Activated CD4-positive, alpha-beta T cell treated with anti-CD3 and anti-CD28 coated beads for 36 hours (primary cell): ENCODE measurements at regions of chr11 and their contacts with region 1.

Region 1: DNA sequence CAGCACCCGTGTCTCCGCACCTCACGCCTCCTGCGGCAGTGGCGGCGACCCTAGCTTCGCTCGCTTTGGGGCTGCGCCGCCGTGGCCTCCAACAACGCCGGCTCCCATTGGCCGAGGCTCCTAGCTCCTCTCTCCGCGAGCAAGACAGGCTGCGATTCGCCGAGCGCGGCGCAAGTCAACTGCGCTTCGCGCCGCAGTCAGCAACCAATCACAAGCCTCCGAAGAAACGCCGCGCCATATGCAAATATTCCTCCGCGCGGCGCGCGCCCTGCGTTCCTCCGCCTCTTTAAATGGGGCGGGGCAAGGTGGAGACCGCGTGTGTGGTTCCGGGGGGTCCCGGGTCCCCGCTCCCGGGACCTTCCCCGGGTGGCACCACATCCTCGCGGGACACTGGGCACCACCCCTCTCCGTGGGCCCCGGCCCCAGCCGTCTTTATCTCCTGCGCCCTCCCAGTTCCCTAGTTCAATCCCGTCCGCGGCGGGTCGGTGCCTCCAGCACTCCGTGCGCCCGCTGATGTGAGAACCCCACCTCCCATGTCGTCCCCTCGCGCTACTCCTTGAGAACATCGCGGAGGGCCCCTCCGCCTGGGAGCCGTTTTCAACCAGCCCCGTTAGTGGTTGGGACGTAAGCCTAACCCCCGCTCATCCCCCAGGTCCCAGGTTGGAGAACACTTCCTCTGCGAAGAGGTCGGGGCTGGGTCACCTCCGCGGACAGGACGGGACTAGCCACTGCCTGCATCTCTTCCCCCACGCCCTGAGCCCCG is at the start of gene NAP1L4:
- DNase-seq: peak; percentile 98
- ATAC-seq: peak; percentile 76
- H3K4me3 Mint-ChIP-seq: peak within 1 kb of the TSS; percentile 100
- H3K27ac Mint-ChIP-seq: peak within 1 kb of the TSS; percentile 100
- H3K4me1 Mint-ChIP-seq: peaks cover 30% of the 10 kb centered on the region
- H3K27me3 Mint-ChIP-seq: no peaks in the 10 kb centered on the region
- total RNA-seq, gene NAP1L4: 241 to 246 TPM

Region 2: DNA sequence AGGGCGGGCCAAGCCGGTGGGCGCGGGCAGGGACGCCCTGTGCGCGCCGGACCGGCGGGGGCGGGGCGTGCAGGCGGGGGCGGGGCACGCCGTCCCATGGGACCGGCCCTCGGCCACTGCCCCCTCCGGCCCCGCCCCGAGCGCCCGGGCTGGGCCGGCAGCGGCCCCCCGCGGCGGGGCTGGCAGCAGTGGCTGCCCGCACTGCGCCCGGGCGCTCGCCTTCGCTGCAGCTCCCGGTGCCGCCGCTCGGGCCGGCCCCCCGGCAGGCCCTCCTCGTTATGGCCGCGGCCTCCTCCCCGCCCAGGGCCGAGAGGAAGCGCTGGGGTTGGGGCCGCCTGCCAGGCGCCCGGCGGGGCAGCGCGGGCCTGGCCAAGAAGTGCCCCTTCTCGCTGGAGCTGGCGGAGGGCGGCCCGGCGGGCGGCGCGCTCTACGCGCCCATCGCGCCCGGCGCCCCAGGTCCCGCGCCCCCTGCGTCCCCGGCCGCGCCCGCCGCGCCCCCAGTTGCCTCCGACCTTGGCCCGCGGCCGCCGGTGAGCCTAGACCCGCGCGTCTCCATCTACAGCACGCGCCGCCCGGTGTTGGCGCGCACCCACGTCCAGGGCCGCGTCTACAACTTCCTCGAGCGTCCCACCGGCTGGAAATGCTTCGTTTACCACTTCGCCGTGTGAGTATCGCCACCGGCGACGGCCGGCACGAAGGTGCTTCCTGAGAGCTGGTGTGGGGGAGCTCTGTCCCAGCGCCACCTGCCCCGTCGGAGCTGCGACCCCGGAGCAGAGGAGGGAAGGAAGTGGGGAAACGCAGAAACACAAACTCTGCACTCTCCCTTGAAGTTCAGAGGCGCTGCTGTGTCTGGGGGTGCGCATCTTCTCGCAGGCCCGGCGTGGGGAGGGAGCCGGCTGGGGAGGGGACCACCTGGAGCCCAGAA is 547.3 kb before region 1 on chr11 and contains the start of gene KCNQ1:
- CTCF ChIA-PET with region 1: no interaction called
- POLR2A ChIA-PET with region 1: no interaction called
- intact Hi-C with region 1: loop called in 1 of 2 experiments (anchors 1 kb)
- DNase-seq: peak; percentile 63
- ATAC-seq: peak; percentile 63
- H3K4me3 Mint-ChIP-seq: peak within 1 kb of the TSS; percentile 86
- H3K27ac Mint-ChIP-seq: peak within 1 kb of the TSS; percentile 71
- H3K4me1 Mint-ChIP-seq: peaks cover 38% of the 10 kb centered on the region
- H3K27me3 Mint-ChIP-seq: no peaks in the 10 kb centered on the region
- total RNA-seq, gene KCNQ1: 9.1 to 10.9 TPM

Region 3: GRCh38 chr11:2901854-2902783 is 90.3 kb before region 1 on chr11:
- CTCF ChIA-PET with region 1: no interaction called
- POLR2A ChIA-PET with region 1: no interaction called
- intact Hi-C with region 1: loop called in 1 of 2 experiments (anchors 1 kb)
- DNase-seq: peak; percentile 98
- ATAC-seq: peak; percentile 96
- H3K4me3 Mint-ChIP-seq: peak overlapping the region; percentile 64
- H3K27ac Mint-ChIP-seq: peak overlapping the region; percentile 22
- H3K4me1 Mint-ChIP-seq: peaks cover 33% of the 10 kb centered on the region
- H3K27me3 Mint-ChIP-seq: no peaks in the 10 kb centered on the region

Region 4: DNA sequence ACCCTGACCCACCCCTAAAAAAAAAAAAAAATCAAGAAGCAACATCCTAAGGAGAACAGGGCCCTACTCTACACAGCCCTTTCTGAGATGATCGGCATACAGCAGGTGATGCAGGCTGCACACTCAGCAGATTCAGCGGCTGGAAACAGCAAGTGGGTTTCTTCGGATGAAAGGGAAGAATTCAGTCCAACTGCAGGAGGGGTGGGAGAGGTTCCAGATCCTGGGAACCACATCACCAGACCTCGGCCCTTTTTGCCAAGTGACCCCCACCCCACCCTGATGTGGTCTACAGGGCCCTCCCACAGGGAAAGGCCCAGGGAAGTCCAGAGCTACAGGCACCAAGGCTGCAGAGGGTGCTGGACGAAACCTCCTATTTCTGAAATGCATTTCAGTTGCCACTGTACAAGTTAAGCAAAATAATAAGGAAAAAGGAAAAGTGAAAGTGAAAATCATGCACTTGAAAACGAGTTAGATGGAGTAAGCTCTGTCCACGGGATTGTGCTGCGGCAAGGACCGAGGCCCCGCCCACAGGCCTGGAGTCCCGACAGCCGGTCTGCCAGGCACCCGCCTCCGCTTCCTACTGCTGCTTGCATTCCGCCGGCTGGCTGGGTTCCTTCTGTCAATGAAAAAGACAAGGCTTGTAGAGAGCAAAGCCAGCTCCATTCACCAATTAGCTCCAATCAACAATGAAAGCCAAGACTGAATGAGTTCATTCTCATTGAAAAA is 47.2 kb before region 1 on chr11:
- CTCF ChIA-PET with region 1: interaction called, 3 read pairs
- POLR2A ChIA-PET with region 1: interaction called, 3 read pairs
- intact Hi-C with region 1: loop called in 1 of 2 experiments (anchors 5 kb)
- DNase-seq: peak; percentile 79
- ATAC-seq: peak; percentile 54
- H3K4me3 Mint-ChIP-seq: no peak overlapping the region
- H3K27ac Mint-ChIP-seq: peak overlapping the region; percentile 55
- H3K4me1 Mint-ChIP-seq: peaks cover 45% of the 10 kb centered on the region
- H3K27me3 Mint-ChIP-seq: no peaks in the 10 kb centered on the region

Region 5: DNA sequence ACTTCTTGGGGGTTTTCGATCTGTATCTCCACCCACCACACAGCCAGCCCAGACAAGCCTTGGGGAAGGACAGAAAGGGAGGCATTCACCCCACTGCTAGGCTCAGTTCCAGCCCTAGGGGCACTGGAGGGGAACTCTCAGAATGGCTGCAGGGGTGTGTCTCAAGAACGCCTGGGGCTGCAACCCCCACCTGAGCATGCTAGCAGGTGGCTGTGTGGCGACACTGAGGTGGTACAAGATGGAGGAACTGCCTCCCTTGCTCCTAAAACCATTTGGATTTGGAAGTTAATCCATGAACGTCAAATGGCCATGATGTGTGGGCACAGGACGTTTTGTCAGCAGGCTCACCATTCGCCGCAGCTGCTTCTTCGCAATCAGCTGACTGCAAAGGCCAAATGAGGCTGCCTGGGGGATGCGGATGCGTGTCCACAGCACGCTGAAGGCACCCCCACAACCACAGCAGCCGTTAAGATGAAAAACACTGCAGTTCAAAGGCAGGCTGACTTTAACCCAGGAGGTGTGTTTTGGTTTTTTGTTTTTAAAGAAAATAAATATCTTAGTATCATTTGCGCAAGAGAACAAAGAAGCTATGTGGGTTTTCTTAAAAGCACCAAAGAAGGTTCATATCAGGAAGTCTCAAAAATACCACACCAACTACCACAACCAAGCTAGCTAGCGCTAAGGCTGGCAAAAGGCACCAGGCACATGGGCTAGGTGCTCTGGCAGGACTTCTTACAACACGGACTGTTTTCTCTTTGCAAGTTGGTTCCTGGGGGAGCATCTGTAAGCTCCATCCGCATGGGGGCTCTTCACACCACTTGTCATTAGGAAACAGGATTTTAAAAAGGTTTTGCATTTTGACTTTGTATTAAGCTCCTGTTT is 21.9 kb after region 1 on chr11:
- CTCF ChIA-PET with region 1: interaction called, 6 read pairs
- POLR2A ChIA-PET with region 1: interaction called, 12 read pairs
- intact Hi-C with region 1: loop called (anchors 1 to 2 kb)
- DNase-seq: peak; percentile 76
- ATAC-seq: peak; percentile 80
- H3K4me3 Mint-ChIP-seq: peak overlapping the region; percentile 16
- H3K27ac Mint-ChIP-seq: peak overlapping the region; percentile 81
- H3K4me1 Mint-ChIP-seq: peaks cover 38% of the 10 kb centered on the region
- H3K27me3 Mint-ChIP-seq: no peaks in the 10 kb centered on the region

Region 6: DNA sequence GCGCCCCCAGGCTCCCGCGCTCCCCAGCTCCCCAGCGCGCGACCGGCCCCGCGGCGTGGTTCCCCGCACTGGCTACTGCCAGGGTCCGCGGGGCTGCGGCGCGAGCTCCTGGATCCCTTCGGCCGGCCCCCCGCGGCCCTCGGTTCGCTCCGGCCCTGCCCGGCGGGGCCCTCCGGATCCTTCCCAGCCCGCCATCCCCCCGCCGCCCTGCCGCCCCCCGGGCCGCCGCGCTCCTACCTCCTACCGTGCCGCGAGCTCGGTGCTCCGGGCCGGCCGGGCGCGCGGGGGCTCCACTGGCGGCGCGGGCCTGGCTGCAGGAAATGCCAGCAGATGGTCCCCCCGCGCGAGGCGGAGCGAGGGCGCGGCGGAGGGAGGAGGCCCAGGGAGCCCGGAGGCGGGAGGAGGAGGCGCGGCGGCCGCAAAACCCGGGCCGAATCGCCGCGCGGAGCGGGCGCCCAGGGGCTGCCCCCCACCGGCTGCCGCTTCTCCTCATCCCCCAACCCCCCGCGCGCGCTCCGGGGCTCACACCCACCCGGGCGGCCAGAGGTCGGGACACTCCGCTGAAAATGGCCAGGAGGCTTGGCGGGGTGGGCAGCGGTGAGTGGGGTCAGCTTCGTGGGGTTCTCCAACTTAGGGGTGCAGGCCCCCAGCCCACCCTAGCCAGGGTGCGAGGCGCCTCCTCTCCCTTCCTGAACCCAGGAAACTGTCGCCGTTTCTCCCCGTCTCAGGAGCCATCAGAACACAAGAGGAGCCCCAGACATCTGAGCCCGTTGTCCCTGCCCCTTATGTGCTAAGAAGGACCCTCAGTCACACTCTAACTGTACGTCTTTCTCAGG is 172.8 kb after region 1 on chr11 and contains the start of gene OSBPL5:
- CTCF ChIA-PET with region 1: no interaction called
- POLR2A ChIA-PET with region 1: no interaction called
- intact Hi-C with region 1: loop called in 1 of 2 experiments (anchors 2 kb)
- DNase-seq: peak; percentile 77
- ATAC-seq: peak; percentile 43
- H3K4me3 Mint-ChIP-seq: peak within 1 kb of the TSS; percentile 67
- H3K27ac Mint-ChIP-seq: no peak within 1 kb of the TSS
- H3K4me1 Mint-ChIP-seq: peaks cover 33% of the 10 kb centered on the region
- H3K27me3 Mint-ChIP-seq: peaks cover 23% of the 10 kb centered on the region
- total RNA-seq, gene OSBPL5: 5.8 to 7.1 TPM

Region 7: GRCh38 chr11:3359092-3359824 is 366.8 kb after region 1 on chr11:
- CTCF ChIA-PET with region 1: no interaction called
- POLR2A ChIA-PET with region 1: no interaction called
- intact Hi-C with region 1: no loop called
- DNase-seq: no peak
- ATAC-seq: no peak
- H3K4me3 Mint-ChIP-seq: no peak overlapping the region
- H3K27ac Mint-ChIP-seq: no peak overlapping the region
- H3K4me1 Mint-ChIP-seq: no peaks in the 10 kb centered on the region
- H3K27me3 Mint-ChIP-seq: no peaks in the 10 kb centered on the region

Region 8: DNA sequence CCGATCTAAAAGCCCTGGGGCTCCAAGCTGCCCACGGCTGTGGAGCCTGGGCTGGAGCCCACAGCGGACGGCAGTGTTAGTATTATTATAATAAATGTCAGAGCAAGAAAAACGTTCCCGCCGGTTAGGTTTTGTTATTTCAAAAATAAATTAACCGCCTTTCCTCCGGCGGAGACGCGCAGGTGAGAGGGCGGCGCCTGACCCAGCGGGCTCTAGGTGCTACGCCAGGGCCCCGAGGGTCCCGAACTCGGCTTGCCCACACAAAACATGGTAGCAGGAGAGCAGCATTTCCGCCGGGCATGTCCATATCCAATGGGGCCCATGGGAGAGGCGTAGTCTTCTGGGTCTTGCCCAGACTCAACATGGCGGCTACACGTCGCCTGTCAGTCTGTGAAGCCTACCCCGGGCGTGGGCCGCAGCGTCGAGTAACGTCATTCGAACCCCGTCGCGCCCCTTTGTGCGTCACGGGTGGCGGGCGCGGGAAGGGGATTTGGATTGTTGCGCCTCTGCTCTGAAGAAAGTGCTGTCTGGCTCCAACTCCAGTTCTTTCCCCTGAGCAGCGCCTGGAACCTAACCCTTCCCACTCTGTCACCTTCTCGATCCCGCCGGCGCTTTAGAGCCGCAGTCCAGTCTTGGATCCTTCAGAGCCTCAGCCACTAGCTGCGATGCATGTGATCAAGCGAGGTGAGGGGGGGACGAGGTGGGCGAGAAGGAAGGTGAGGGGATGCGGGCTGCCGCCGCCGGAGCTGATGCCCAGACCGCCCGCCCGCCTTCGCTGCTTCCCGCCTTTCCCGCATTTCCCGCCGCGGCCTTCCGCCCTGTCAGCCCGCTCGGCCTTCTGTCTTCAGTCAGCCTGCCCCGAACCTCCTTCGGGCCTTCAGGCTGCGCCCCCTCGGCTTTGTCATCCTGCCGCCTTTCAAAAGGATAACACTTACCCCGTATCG is 1102.2 kb after region 1 on chr11 and contains the start of gene RRM1:
- CTCF ChIA-PET with region 1: no interaction called
- POLR2A ChIA-PET with region 1: no interaction called
- intact Hi-C with region 1: loop called in 1 of 2 experiments (anchors 10 kb)
- DNase-seq: peak; percentile 96
- ATAC-seq: peak; percentile 96
- H3K4me3 Mint-ChIP-seq: peak within 1 kb of the TSS; percentile 98
- H3K27ac Mint-ChIP-seq: peak within 1 kb of the TSS; percentile 97
- H3K4me1 Mint-ChIP-seq: peaks cover 71% of the 10 kb centered on the region
- H3K27me3 Mint-ChIP-seq: no peaks in the 10 kb centered on the region
- total RNA-seq, gene RRM1: 220 to 259 TPM